SK-N-SH (cell line): ENCODE measurements at regions of chr17 and their contacts with region 1.

Region 1: GRCh38 chr17:68457539-68458259 is 403 bp upstream of the WIPI1 start:
- DNase-seq: peak; percentile 100
- H3K4me3 ChIP-seq: peak overlapping the region; percentile 77 to 93
- H3K27ac ChIP-seq: peak overlapping the region in 1 of 2 experiments; percentile 18; a peak in 1 of 4 replicates
- H3K4me1 ChIP-seq: peaks cover 8 to 23% of the 10 kb centered on the region in 2 experiments; a peak in 3 of 4 replicates
- H3K27me3 ChIP-seq: no peaks in the 10 kb centered on the region
- CTCF ChIP-seq: no peak
- EP300 ChIP-seq: no peak
- RAD21 ChIP-seq: no peak

Region 2: DNA sequence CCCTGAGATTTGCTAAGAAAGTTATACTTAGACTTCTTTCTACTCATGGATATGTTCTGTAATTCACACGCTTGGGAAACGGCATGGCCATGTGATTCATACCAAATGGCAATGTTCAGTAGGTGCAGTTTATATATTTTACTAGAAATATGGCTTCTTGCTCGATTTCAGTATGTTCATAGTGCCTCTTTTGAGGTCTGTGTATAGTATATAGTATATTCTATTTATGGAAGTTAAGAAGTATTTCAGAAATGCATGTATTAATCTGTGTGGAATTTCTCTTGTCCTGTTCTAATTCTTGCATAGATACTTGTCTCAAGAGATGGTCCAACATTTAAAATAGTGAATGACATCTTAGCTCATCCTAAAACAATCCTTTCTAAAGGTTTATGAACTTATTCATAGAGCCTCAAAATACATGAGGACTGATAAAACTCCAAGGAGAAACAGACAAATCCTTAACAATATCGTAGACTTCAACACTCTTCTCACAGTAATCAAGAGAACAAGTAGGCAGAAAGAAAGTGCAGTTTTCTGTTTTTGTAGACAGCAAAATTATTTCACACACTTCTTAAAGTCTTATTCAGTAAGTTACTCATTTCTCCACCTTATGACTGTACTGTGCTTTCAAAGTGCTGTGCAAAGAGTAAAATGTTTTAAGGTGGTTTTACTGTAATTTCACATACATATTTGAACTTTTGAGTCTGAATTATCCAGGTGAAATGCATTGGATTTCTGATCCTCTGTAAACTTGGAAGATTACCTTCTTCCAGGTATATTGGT is 621.3 kb before region 1 on chr17:
- CTCF ChIA-PET with region 1: no interaction called
- POLR2A ChIA-PET with region 1: no interaction called
- DNase-seq: no peak
- H3K4me3 ChIP-seq: peak overlapping the region in 1 of 2 experiments; percentile 6; a peak in 2 of 4 replicates
- H3K27ac ChIP-seq: peak overlapping the region; percentile 7 to 73; a peak in 3 of 4 replicates
- H3K4me1 ChIP-seq: peaks cover 3 to 10% of the 10 kb centered on the region in 2 experiments; a peak in 3 of 4 replicates
- H3K27me3 ChIP-seq: no peaks in the 10 kb centered on the region
- CTCF ChIP-seq: no peak
- EP300 ChIP-seq: 0 out of 4 replicates have a peak, but pooled peaks of 1 of the 2 experiments have one; percentile 12
- RAD21 ChIP-seq: no peak

Region 3: DNA sequence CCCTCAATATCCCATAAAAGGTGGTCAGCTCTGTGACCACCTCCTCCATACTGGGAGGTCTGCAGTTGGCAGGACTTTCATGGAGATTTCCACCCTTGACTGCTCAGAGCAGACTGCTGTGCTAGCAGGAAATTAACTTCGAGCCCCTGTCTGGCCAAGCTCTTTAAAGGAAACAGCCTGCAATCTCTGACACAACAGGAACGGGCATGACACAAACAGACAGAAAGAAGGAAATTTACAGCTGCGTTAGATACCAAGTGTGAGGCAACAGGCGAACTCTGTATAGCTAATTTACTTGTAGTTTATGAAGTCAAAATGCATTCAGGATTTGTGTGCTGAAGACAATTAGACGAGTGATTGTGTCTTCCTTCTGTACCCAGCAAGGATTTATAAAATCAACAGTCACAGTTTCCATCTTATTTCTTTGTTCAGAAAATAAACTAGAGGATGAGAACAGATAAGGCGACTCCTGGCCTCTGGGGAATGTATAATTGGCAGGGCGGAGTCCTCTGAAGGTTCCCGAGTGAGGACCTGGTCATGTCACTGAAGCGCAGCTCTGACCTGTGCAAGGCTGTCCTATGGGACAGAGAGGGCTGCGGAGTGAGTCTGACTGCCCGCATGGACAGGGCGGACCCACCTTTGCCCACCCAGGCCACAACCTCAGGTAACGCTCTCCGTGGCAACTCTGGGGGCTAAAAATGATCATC is 16.5 kb before region 1 on chr17:
- CTCF ChIA-PET with region 1: interaction called, 63 read pairs
- POLR2A ChIA-PET with region 1: interaction called, 3 read pairs
- DNase-seq: no peak
- H3K4me3 ChIP-seq: no peak overlapping the region
- H3K27ac ChIP-seq: no peak overlapping the region
- H3K4me1 ChIP-seq: peaks cover 0 to 4% of the 10 kb centered on the region in 2 experiments; a peak in 2 of 4 replicates
- H3K27me3 ChIP-seq: no peaks in the 10 kb centered on the region
- CTCF ChIP-seq: no peak
- EP300 ChIP-seq: no peak
- RAD21 ChIP-seq: no peak

Region 4: DNA sequence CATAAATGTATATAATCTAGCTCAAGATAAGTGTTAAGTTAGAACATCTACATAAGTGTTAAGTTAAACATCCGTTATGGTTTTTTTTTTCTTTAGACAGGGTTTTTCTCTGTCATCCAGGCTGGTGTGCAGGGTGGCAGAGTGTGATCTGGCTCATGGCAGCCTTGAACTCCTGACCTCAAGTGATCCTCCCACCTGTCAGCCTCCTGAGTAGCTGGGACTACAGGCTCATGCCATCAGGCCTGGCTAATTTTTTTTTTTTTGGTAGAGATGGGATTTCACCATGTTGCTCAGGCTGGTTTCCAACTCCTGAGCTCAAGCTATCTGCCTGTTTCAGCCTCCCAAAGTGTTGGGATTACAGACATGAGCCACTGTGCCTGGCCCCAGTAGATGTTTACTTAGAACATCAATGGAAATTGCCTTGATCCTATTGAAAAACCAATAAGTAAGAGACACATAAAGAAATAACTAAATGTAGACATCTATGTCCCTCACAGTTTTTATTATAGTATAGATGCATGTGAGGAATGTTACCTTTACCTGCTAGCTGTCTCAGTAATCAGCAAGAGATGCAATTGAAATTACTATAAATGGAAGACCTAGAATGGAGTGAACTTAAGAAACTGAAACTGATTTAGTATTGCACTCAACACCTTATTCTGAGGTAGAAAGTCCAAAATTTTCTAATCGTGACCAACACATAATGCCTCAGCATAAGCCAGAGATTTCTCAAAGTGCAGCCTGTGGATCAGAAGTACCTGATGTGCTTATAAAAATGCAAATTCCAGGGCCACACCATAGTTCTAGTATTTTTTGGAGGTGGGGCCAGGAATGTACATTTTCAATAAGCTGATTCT is 149.0 kb after region 1 on chr17:
- CTCF ChIA-PET with region 1: no interaction called
- POLR2A ChIA-PET with region 1: no interaction called
- DNase-seq: no peak
- H3K4me3 ChIP-seq: no peak overlapping the region
- H3K27ac ChIP-seq: no peak overlapping the region
- H3K4me1 ChIP-seq: no peaks in the 10 kb centered on the region
- H3K27me3 ChIP-seq: peaks cover 13% of the 10 kb centered on the region
- CTCF ChIP-seq: no peak
- EP300 ChIP-seq: no peak
- RAD21 ChIP-seq: no peak